Activated T-helper 2 cell treated with anti-CD3 and anti-CD28 coated beads, Interferon-gamma antibody, Interleukin-2, Interleukin-4, amounts not matched to agents 10 μg/mL and 5 μg/mL and 100 μg/mL, durations not matched to agents 14 hours and 24 hours and 36 hours (primary cell): ENCODE measurements at regions of chr17 and their contacts with region 1.

Region 1: GRCh38 chr17:32569171-32570080 is 82.6 kb downstream of the CDK5R1 start:
- DNase-seq: no peak
- H3K4me3 Mint-ChIP-seq: no peak overlapping the region
- H3K27ac Mint-ChIP-seq: no peak overlapping the region
- H3K4me1 Mint-ChIP-seq: peaks cover 10% of the 10 kb centered on the region
- H3K27me3 Mint-ChIP-seq: no peaks in the 10 kb centered on the region

Region 2: DNA sequence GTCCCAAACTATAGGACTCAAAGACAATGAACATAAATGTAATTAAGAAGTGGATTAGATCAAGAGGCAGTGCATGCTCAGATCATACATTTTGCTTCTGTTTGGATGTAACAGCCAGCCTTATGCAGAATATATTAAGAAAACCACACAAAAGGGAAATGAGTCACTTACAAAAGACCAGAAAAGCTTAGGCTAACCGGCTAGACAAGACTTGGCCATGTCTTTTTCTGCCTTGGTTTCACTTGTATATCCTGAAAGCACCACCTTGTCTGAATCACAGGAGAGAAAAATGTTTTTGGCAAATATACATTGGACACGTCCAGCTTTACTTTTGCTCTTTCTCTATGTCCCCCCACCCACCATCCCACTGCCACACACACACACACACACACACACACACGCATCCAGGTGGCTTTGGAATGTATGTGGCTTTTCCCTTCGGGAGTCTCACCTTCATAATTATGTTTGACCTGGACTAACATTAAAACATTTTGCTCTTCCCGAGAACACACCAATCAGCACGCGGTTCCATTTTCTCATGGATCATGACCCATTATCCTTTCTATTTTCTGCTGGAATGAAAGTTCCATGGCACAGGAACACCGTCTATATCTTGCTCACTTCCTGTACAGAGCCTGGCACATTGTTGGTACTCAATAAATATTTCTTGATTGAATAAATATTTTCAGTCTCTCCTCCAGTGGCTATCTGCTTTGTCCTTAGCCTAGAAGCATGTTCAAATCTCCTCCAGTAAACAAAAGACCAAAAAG is 18.1 kb before region 1 on chr17:
- intact Hi-C with region 1: loop called (anchors 2 kb)
- DNase-seq: no peak
- H3K4me3 Mint-ChIP-seq: no peak overlapping the region
- H3K27ac Mint-ChIP-seq: peak overlapping the region; percentile 55
- H3K4me1 Mint-ChIP-seq: peaks cover 47% of the 10 kb centered on the region
- H3K27me3 Mint-ChIP-seq: no peaks in the 10 kb centered on the region